ENCODE measurements at regions of chr2 and their contacts with region 1.

Region 1: GRCh38 chr2:197310271-197310985 is at the start of gene ANKRD44:
- DNase-seq: peak; percentile 79 to 98 (median 90)

Region 2: GRCh38 chr2:196926562-196927375 is 383.7 kb before region 1 on chr2 and contains the start of gene PGAP1:
- intact Hi-C with region 1: loop called (anchors 2 kb)
- DNase-seq: peak; percentile 81 to 97 (median 86)

Region 3: DNA sequence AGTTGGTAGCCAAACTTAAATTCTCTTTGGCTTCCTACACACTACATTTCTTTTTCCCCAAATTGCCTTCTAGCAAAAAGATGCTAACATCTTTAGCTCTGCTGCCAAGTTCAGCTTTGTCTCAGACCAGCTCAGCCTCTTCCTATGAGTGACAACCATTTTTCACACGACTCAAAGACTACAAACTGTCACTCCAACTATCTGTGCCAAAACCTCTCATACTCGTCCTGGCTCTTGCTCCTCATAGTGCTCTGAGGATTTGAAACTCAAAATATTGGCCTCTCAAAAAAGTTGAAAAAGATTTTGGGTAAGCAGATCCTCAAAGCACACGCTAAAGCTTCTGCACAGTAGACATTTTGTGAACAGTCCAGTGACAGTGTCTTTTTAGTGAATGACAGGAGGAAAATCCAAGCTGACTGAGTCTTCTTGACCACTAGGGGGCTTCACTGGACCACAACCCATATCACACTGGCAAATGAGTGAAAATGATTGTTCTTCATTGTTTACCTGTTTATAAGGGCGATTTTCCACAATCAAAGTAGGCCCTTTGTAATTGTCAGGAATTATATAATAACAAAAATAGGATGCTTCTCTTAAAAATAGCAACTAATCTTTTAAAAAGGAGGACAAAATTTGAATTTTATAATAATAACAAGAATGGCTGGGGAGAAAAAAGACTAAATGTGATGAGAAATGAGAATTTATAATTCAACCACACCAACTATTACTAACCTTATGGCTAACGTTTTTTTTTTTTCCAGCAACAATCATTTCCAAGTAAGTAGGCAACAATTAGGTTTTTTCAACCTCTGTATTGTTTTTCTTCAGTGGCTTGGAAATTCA is 298.4 kb before region 1 on chr2:
- intact Hi-C with region 1: loop called (anchors 2 kb)
- DNase-seq: peak in 2 of 10 donors; percentile 39 to 57

Region 4: GRCh38 chr2:197113275-197113711 is 197.1 kb before region 1 on chr2:
- intact Hi-C with region 1: loop called (anchors 5 kb)
- DNase-seq: no peak

Region 5: GRCh38 chr2:197191177-197191939 is 119.1 kb before region 1 on chr2:
- intact Hi-C with region 1: loop called (anchors 1 kb)
- DNase-seq: no peak

Region 6: DNA sequence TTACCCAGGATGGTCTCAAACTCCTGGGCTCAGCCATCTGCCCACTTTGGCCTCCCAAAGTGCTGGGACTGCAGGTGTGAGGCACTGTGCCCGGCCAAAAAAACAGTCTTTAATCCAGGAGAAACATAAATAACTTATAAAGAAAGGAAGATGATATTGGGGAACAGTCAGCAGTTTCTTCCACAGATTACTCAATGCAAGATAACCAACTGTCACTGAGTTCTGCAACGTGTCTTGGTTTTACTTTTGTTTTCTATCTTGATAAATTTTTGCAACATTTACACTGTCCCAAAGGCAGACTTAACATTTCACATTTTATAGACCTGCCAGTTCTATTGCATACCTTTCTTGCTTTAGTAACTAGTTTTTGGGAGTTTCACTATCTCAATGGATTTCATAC is 71.0 kb before region 1 on chr2:
- intact Hi-C with region 1: loop called (anchors 5 kb)
- DNase-seq: no peak

Measured in posterior cingulate gyrus (tissue), 11 donors.